Panc1 (cell line): ENCODE measurements at regions of chr10 and their contacts with region 1.

Region 1: DNA sequence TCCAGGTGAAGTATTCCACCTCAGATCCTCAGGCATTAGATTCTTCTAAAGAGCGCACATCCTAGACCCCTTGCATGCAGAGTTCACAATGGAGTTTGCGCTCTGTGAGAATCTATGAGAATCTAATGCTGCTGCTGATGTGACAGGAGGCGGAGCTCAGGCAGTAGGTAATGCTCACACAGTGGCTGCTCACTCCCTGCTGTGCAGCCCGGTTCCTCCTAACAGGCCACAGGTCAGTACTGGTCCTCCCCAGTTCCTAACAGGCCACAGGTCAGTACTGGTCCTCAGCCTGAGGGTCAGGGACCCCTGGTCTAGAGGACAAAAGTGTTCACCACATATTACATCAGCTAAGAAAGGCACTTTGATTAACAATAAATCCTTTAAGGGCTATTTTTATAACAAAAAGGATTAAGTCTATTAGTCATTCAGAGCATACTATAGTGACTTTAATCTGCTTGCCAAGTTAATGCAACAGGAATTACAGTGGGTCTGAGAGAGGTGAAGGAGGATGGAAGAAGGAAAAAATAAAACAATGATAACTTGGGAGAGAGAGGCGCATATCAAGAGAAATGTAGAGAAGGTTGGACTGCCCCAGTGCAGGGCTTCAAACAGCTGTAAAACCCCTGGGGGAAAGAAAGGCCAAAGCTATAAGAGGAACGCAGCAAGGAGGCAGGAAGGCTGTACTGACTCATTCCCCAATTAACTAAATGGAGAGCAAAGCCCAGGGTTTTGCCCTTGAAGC is 49.2 kb downstream of the CUL2 start:
- DNase-seq: no peak
- ATAC-seq: no peak
- H3K4me3 ChIP-seq: no peak overlapping the region
- H3K27ac ChIP-seq: no peak overlapping the region
- H3K4me1 ChIP-seq: no peaks in the 10 kb centered on the region
- H3K27me3 ChIP-seq: no peaks in the 10 kb centered on the region
- CTCF ChIP-seq: no peak

Region 2: GRCh38 chr10:34862892-34863291 is 178.0 kb before region 1 on chr10:
- CTCF ChIA-PET with region 1: interaction called, 15 read pairs
- POLR2A ChIA-PET with region 1: no interaction called
- in situ Hi-C with region 1: no loop called
- intact Hi-C with region 1: no loop called
- DNase-seq: no peak
- ATAC-seq: no peak
- H3K4me3 ChIP-seq: no peak overlapping the region
- H3K27ac ChIP-seq: no peak overlapping the region
- H3K4me1 ChIP-seq: no peaks in the 10 kb centered on the region
- H3K27me3 ChIP-seq: no peaks in the 10 kb centered on the region
- CTCF ChIP-seq: no peak

Region 3: GRCh38 chr10:34941471-34942357 is 99.2 kb before region 1 on chr10:
- CTCF ChIA-PET with region 1: no interaction called
- POLR2A ChIA-PET with region 1: interaction called, 23 read pairs
- in situ Hi-C with region 1: no loop called
- intact Hi-C with region 1: no loop called
- DNase-seq: no peak
- ATAC-seq: no peak
- H3K4me3 ChIP-seq: no peak overlapping the region
- H3K27ac ChIP-seq: no peak overlapping the region
- H3K4me1 ChIP-seq: no peaks in the 10 kb centered on the region
- H3K27me3 ChIP-seq: no peaks in the 10 kb centered on the region
- CTCF ChIP-seq: no peak

Region 4: DNA sequence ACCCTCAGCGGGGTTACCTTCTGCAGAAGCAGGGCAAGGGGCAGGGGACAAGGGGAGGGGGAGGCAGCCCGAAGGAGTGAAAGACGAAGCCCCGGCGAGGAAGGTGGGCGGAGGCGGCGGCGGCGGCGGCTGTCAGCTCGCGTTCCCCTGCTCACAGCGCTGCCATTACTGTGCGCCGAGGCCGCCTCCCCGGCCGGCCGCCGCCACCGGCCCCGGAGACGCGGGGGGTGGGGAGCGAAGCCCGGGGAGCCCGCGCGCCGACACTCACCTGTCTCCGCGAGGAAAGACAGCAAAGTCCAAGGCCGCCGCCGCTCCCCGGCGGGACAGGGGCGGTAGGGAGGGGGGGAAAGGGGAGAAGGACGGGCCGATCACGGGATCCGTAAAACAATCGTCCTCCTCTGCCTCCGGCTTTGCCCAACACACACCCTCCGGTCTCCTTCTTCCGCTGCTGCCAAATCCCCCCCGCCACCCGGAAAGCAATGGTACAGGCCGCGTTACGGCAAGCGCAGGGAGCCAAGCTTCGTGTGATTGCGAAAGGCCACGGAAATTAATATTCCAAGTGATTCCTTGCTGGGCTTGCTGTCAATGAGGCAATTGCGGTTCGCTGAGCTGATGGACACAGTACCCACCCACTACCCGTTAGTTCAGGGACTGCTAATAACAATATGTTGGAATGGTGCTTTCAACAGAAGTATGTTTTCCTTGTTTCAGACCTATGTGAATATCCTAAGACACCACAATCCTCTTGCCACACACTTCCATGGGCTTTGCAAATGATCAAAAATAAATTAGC is 49.4 kb after region 1 on chr10 and contains the start of gene CUL2:
- CTCF ChIA-PET with region 1: no interaction called
- POLR2A ChIA-PET with region 1: no interaction called
- in situ Hi-C with region 1: no loop called
- intact Hi-C with region 1: no loop called
- DNase-seq: peak; percentile 77
- ATAC-seq: peak; percentile 98
- H3K4me3 ChIP-seq: peak within 1 kb of the TSS; percentile 76 to 84
- H3K27ac ChIP-seq: peak within 1 kb of the TSS; percentile 89
- H3K4me1 ChIP-seq: peaks cover 13% of the 10 kb centered on the region
- H3K27me3 ChIP-seq: no peaks in the 10 kb centered on the region
- CTCF ChIP-seq: no peak
- total RNA-seq, gene CUL2: 32.4 TPM